Caco-2 (cell line): ENCODE measurements at regions of chr20 and their contacts with region 1.

Region 1: DNA sequence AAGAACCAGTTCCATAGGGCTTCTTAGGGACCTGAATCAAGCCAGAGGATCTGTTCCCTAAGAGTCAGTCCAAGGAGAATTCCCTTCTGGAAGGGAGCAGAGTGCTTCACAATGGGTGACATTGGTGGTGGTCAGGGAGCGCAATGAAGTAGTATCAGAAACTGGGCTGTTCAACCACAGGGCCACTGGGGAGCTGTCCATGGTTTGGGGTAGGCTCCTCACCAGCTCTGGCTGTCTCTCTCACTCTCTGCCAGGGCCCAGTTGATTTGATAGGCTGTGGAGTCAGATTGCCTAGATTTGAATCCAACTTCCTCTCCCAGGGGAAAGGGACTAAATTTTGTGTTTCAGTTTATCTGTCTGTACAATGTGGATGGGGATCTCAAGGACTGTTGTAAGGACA is 36.7 kb upstream of the CHD6 start:
- DNase-seq: peak; percentile 67 to 79
- H3K4me3 ChIP-seq: no peak overlapping the region
- H3K4me3 Mint-ChIP-seq: no peak overlapping the region
- H3K27ac Mint-ChIP-seq: no peak overlapping the region
- H3K4me1 ChIP-seq: peaks cover 25% of the 10 kb centered on the region
- H3K4me1 Mint-ChIP-seq: peaks cover 23% of the 10 kb centered on the region
- H3K27me3 ChIP-seq: no peaks in the 10 kb centered on the region
- H3K27me3 Mint-ChIP-seq: no peaks in the 10 kb centered on the region
- CTCF ChIP-seq: no peak

Region 2: GRCh38 chr20:41617931-41618806 is 36.7 kb before region 1 on chr20 and contains the start of gene CHD6:
- CTCF ChIA-PET with region 1: interaction called, 7 read pairs
- POLR2A ChIA-PET with region 1: interaction called, 3 read pairs
- intact Hi-C with region 1: loop called (anchors 1 kb)
- DNase-seq: peak; percentile 100
- H3K4me3 ChIP-seq: peak within 1 kb of the TSS; percentile 67
- H3K4me3 Mint-ChIP-seq: peak within 1 kb of the TSS; percentile 86
- H3K27ac Mint-ChIP-seq: peak within 1 kb of the TSS; percentile 67
- H3K4me1 ChIP-seq: peaks cover 26% of the 10 kb centered on the region
- H3K4me1 Mint-ChIP-seq: peaks cover 42% of the 10 kb centered on the region
- H3K27me3 ChIP-seq: no peaks in the 10 kb centered on the region
- H3K27me3 Mint-ChIP-seq: no peaks in the 10 kb centered on the region
- CTCF ChIP-seq: no peak
- total RNA-seq, gene CHD6: 80.5 and 88.1 TPM in 2 replicates